Tibial artery (tissue), 4 donors: ENCODE measurements at regions of chr7 and their contacts with region 1.

Region 1: DNA sequence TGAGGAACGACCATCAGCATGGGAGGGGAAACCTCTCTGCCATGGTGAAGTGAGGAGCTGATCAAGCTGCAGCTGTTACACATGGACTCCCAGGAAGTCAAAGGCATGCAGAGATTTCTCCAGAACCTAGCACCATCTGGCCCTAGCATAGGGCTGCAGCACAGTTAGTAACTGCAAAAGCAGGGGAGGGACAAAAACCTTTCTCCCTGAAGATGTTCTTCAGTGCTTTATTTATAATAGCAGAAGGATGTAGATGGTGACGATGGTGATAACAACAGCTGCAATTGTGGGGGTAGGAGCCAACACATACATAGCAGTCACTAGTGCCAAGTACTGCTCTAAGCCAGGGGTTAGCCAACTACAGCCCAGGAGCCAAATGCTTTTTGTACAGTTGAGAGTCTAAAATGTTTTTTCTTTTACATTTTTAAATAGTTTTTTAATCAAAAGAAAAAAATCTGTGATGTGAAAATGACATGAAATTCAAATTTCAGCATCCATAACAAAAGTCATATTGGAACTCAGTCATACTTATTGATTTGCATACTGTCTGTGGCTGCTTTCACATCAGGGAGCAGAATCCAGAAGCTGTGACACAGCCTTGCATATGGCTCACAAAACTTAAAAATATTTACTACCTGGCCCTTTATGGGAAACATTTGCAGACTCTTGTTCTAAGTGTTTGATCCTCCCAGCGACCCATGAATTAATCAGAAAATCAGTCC is 299.5 kb downstream of the ELMO1 start:
- DNase-seq: no peak
- H3K4me3 ChIP-seq: no peak overlapping the region
- H3K27ac ChIP-seq: no peak overlapping the region
- H3K4me1 ChIP-seq: peaks cover 0 to 10% (median 0%) of the 10 kb centered on the region in 4 donors
- H3K27me3 ChIP-seq: no peaks in the 10 kb centered on the region
- CTCF ChIP-seq: no peak

Region 2: GRCh38 chr7:37128327-37129034 is 20.7 kb before region 1 on chr7:
- intact Hi-C with region 1: no loop called
- DNase-seq: no peak
- H3K4me3 ChIP-seq: no peak overlapping the region
- H3K27ac ChIP-seq: no peak overlapping the region
- H3K4me1 ChIP-seq: peaks cover 0 to 11% (median 3%) of the 10 kb centered on the region in 4 donors
- H3K27me3 ChIP-seq: no peaks in the 10 kb centered on the region
- CTCF ChIP-seq: no peak

Region 3: DNA sequence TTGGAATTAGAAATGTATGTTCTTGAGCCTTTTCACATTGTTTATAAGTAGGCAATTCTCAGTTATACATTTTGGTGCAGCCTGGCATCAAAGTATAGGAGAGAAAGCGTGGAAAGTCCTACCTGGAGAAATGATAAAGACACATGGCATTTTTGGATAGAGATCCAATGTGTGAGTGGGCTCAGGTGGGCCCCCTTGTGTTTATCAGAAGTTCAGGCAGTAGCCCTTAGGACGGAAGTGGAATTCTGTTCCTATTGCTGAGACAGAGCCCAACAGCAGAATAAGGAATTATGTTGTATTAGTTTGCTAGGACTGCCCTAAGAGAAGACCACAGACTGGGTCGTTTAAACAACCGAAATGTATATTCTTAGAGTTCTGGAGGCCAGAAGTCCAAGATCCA is 1567.2 kb after region 1 on chr7:
- intact Hi-C with region 1: loop called (anchors 5 kb)
- DNase-seq: no peak
- H3K4me3 ChIP-seq: no peak overlapping the region
- H3K27ac ChIP-seq: no peak overlapping the region
- H3K4me1 ChIP-seq: no peaks in the 10 kb centered on the region
- H3K27me3 ChIP-seq: no peaks in the 10 kb centered on the region
- CTCF ChIP-seq: no peak